Psoas muscle (tissue), 8 donors: ENCODE measurements at regions of chr4 and their contacts with region 1.

Region 1: DNA sequence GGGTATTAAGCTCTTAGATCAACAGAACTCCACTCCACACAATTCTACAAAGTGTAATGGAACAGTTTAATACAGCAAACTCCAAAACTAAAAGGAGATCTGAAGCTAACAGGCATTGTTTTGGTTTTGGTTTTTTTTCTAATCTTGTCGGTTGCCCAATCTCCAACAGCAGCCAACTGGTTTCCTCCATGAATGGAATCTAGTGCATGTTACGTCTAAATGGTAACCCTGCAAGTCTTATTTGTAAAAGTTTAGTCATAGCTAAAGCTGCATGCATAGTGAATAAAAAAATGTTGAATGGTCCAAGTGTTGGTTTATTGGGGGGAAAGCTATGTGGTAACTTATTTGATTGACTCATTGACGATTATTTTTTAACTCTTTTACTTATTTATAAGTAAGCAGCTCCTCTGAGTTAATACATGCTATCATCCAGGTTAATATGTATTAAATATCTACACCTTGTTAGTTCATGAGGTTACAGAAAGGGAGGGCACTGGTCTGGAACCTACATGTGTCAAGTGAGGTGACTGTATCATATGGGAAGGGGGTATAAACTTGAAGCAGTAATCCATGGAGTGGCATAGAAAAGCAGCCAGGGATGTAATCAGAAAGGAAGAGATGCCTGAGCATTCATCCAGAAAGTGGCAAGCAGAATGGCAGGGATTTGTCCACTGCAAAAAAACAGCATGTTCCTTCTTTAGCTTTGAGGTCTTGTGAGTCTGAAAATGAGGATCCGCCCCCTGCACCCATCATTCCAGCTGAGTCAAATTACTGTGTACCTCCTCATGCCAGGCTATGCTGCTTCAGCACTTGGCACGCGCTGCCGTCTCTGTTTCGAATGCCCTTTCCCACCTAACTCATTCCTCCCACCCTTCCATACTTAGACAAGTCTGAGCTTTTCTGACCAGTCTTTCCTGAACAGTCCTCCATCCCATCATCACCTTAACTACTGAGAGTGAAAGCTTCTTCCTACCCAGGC is 81.7 kb downstream of the PDGFC start:
- DNase-seq: peak; percentile 39 to 57
- ATAC-seq: peak; percentile 41 to 67 (median 54)
- H3K4me3 ChIP-seq: no peak overlapping the region
- H3K27ac ChIP-seq: no peak overlapping the region
- H3K4me1 ChIP-seq: no peaks in the 10 kb centered on the region
- H3K27me3 ChIP-seq: no peaks in the 10 kb centered on the region
- CTCF ChIP-seq: no peak

Region 2: DNA sequence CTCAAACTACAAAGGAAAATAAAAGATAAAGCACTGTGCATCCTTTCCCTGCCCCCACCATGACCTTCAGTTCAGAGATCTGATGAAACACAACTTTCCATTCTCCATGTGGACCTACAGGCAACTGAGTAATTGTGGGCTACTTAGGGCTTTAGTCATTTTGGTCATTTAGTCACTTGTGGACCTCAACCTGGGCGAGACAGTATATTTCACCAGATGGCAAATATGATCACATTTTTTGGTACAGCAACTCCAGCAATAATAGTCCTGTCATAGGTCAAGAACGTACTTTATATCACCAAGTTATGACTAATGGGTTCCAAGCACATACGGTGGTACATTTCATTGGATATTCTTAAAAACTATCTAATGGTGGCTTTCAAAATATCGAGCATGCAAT is 59.6 kb before region 1 on chr4:
- intact Hi-C with region 1: loop called in 1 of 2 experiments (anchors 10 kb)
- DNase-seq: no peak
- ATAC-seq: no peak
- H3K4me3 ChIP-seq: no peak overlapping the region
- H3K27ac ChIP-seq: no peak overlapping the region
- H3K4me1 ChIP-seq: peaks cover 5% of the 10 kb centered on the region
- H3K27me3 ChIP-seq: no peaks in the 10 kb centered on the region
- CTCF ChIP-seq: no peak